Heart right ventricle (tissue), 16 donors: ENCODE measurements at regions of chr2 and their contacts with region 1.

Region 1: GRCh38 chr2:233135421-233135820 is 75.3 kb downstream of the INPP5D start:
- DNase-seq: no peak
- ATAC-seq: no peak
- H3K4me3 ChIP-seq: no peak overlapping the region
- H3K27ac ChIP-seq: no peak overlapping the region
- H3K4me1 ChIP-seq: no peaks in the 10 kb centered on the region
- H3K27me3 ChIP-seq: peaks cover 0 to 12% (median 6%) of the 10 kb centered on the region in 7 donors
- CTCF ChIP-seq: no peak

Region 2: DNA sequence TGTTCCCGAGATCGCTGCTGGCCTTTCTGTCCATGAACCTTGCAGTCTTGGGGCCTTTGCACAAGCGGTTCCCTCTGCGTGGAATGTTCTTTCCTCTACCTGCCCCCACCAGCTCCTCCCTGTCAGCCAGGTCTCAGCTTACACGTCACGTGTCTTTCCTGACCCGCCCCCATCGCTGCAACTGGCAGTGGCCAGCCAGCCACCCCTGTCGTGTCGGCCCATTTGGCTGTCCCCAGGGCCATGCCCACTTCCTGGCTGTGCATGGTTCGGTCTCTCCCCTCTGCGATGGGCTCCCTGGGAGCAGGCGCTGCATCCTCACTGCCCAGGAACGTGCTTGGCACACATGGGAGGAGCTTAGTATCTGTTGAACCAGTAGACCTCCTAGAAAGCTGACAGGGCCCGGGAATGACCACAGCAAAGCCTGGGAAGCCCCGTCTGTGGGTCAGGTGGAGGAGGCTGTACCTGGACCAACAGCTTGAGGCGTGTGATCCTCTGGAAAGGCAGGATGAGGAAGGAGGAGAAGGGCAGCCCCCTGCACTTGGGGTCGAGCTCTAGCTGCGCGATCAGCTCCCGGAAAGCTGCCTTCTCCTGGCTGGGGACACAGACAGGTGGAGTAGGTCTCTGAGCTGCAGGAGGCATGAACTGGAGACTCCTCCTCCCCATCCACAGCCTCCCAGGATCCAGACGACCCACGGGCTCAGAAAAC is 244.4 kb before region 1 on chr2:
- intact Hi-C with region 1: no loop called
- DNase-seq: no peak
- ATAC-seq: peak in 6 of 8 donors; percentile 22 to 55 (median 40)
- H3K4me3 ChIP-seq: peak overlapping the region in 2 of 10 donors; percentile 13
- H3K27ac ChIP-seq: no peak overlapping the region
- H3K4me1 ChIP-seq: peaks cover 0 to 10% (median 6%) of the 10 kb centered on the region in 9 donors
- H3K27me3 ChIP-seq: peaks cover 0 to 57% (median 10%) of the 10 kb centered on the region in 7 donors
- CTCF ChIP-seq: no peak

Region 3: GRCh38 chr2:233012301-233012971 is 123.0 kb before region 1 on chr2:
- intact Hi-C with region 1: loop called in 1 of 10 experiments (anchors 5 kb)
- DNase-seq: no peak
- ATAC-seq: no peak
- H3K4me3 ChIP-seq: no peak overlapping the region
- H3K27ac ChIP-seq: no peak overlapping the region
- H3K4me1 ChIP-seq: no peaks in the 10 kb centered on the region
- H3K27me3 ChIP-seq: peaks cover 0 to 7% (median 0%) of the 10 kb centered on the region in 7 donors
- CTCF ChIP-seq: no peak

Region 4: GRCh38 chr2:233061591-233062450 is 73.6 kb before region 1 on chr2:
- intact Hi-C with region 1: no loop called
- DNase-seq: peak; percentile 58 to 71
- ATAC-seq: peak; percentile 57 to 75 (median 68)
- H3K4me3 ChIP-seq: peak overlapping the region in 9 of 10 donors; percentile 41 to 82 (median 59)
- H3K27ac ChIP-seq: peak overlapping the region; percentile 25 to 98 (median 88)
- H3K4me1 ChIP-seq: peaks cover 11 to 67% (median 37%) of the 10 kb centered on the region in 9 donors
- H3K27me3 ChIP-seq: no peaks in the 10 kb centered on the region
- CTCF ChIP-seq: peak in 6 of 9 donors; percentile 10 to 41 (median 24)